ENCODE measurements at regions of chr11 and their contacts with region 1.

Region 1: GRCh38 chr11:27392278-27393114 is 29.5 kb upstream of the CCDC34 start:
- DNase-seq: peak; percentile 66
- ATAC-seq: no peak
- H3K4me3 ChIP-seq: no peak overlapping the region
- H3K27ac ChIP-seq: peak overlapping the region; percentile 58
- H3K4me1 ChIP-seq: peaks cover 97% of the 10 kb centered on the region
- H3K27me3 ChIP-seq: no peaks in the 10 kb centered on the region
- CTCF ChIP-seq: no peak
- EP300 ChIP-seq: 0 out of 4 replicates have a peak, but pooled peaks of 1 of the 2 experiments have one; percentile 17
- POLR2A ChIP-seq: no peak
- RAD21 ChIP-seq: no peak

Region 2: GRCh38 chr11:27201454-27202236 is 190.9 kb before region 1 on chr11:
- CTCF ChIA-PET with region 1: no interaction called
- POLR2A ChIA-PET with region 1: interaction called, 3 read pairs
- in situ Hi-C with region 1: no loop called
- intact Hi-C with region 1: loop called (anchors 5 kb)
- DNase-seq: peak; percentile 96
- ATAC-seq: peak; percentile 93
- H3K4me3 ChIP-seq: peak overlapping the region in 2 of 3 experiments; percentile 27 to 51; a peak in 4 of 6 replicates
- H3K27ac ChIP-seq: peak overlapping the region; percentile 46
- H3K4me1 ChIP-seq: peaks cover 47% of the 10 kb centered on the region
- H3K27me3 ChIP-seq: no peaks in the 10 kb centered on the region
- CTCF ChIP-seq: no peak
- EP300 ChIP-seq: peak in 1 of 2 experiments; percentile 77; a peak in 2 of 4 replicates
- POLR2A ChIP-seq: no peak
- RAD21 ChIP-seq: no peak

Region 3: DNA sequence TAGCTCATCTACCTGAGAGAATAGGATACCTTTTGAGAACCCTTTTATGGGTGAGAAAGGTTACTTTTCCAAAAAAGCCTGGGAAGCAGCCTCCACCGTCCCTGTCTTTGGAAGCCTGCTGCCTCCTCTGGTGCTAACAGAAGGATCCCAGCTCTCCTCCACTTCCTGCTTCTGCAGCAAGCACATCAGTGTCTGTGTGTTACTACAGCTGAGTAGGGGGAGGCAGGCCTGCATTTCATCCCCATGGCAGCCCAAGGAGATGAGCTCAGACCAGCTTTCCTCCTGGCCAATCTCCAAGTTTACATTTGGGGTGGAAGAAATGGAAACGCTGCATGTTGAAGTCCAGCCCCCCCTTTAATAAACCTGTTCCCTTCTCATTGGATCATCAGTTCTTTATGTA is 22.1 kb before region 1 on chr11:
- CTCF ChIA-PET with region 1: no interaction called
- POLR2A ChIA-PET with region 1: interaction called, 65 read pairs
- in situ Hi-C with region 1: no loop called
- intact Hi-C with region 1: loop called (anchors 1 kb)
- DNase-seq: no peak
- ATAC-seq: no peak
- H3K4me3 ChIP-seq: no peak overlapping the region
- H3K27ac ChIP-seq: no peak overlapping the region
- H3K4me1 ChIP-seq: peaks cover 27% of the 10 kb centered on the region
- H3K27me3 ChIP-seq: no peaks in the 10 kb centered on the region
- CTCF ChIP-seq: no peak
- EP300 ChIP-seq: no peak
- POLR2A ChIP-seq: no peak
- RAD21 ChIP-seq: no peak

Region 4: GRCh38 chr11:27456140-27456794 is 63.8 kb after region 1 on chr11:
- CTCF ChIA-PET with region 1: interaction called, 3 read pairs
- POLR2A ChIA-PET with region 1: interaction called, 12 read pairs
- in situ Hi-C with region 1: no loop called
- intact Hi-C with region 1: no loop called
- DNase-seq: peak; percentile 55
- ATAC-seq: peak; percentile 52
- H3K4me3 ChIP-seq: peak overlapping the region in 1 of 3 experiments; percentile 23; a peak in 1 of 6 replicates
- H3K27ac ChIP-seq: peak overlapping the region; percentile 5
- H3K4me1 ChIP-seq: peaks cover 90% of the 10 kb centered on the region
- H3K27me3 ChIP-seq: no peaks in the 10 kb centered on the region
- CTCF ChIP-seq: no peak
- EP300 ChIP-seq: peak in 1 of 2 experiments; percentile 23; a peak in 1 of 4 replicates
- POLR2A ChIP-seq: no peak
- RAD21 ChIP-seq: no peak

Region 5: GRCh38 chr11:27472398-27473016 is 80.0 kb after region 1 on chr11 and contains the start of gene LGR4:
- CTCF ChIA-PET with region 1: no interaction called
- POLR2A ChIA-PET with region 1: interaction called, 40 read pairs
- in situ Hi-C with region 1: loop called (anchors 5 kb)
- intact Hi-C with region 1: loop called (anchors 2 kb)
- DNase-seq: peak; percentile 97
- ATAC-seq: peak; percentile 93
- H3K4me3 ChIP-seq: peak within 1 kb of the TSS; percentile 64 to 92 (median 85)
- H3K27ac ChIP-seq: peak within 1 kb of the TSS; percentile 90
- H3K4me1 ChIP-seq: peaks cover 52% of the 10 kb centered on the region
- H3K27me3 ChIP-seq: no peaks in the 10 kb centered on the region; a peak in 1 of 5 replicates
- CTCF ChIP-seq: no peak
- EP300 ChIP-seq: no peak
- POLR2A ChIP-seq: peak; percentile 91 to 95
- RAD21 ChIP-seq: peak; percentile 35; the same call in 1 of the 2 replicates
- total RNA-seq, gene LGR4: 51.4 and 68.7 TPM in 2 replicates

Measured in HepG2 (cell line).